CD4-positive, alpha-beta T cell (primary cell): ENCODE measurements at regions of chr13 and their contacts with region 1.

Region 1: GRCh38 chr13:42991892-42992763 is at the start of gene EPSTI1:
- DNase-seq: peak; percentile 57 to 86 (median 72)
- ATAC-seq: peak; percentile 80
- H3K4me3 ChIP-seq: peak within 1 kb of the TSS; percentile 94
- H3K4me3 Mint-ChIP-seq: peak within 1 kb of the TSS; percentile 94
- H3K27ac ChIP-seq: peak within 1 kb of the TSS; percentile 92 to 94
- H3K27ac Mint-ChIP-seq: peak within 1 kb of the TSS; percentile 100
- H3K4me1 ChIP-seq: peaks cover 27% of the 10 kb centered on the region
- H3K4me1 Mint-ChIP-seq: peaks cover 54% of the 10 kb centered on the region
- H3K27me3 ChIP-seq: no peaks in the 10 kb centered on the region
- H3K27me3 Mint-ChIP-seq: no peaks in the 10 kb centered on the region
- CTCF ChIP-seq: no peak
- total RNA-seq, gene EPSTI1: 23.5 to 24.5 TPM

Region 2: DNA sequence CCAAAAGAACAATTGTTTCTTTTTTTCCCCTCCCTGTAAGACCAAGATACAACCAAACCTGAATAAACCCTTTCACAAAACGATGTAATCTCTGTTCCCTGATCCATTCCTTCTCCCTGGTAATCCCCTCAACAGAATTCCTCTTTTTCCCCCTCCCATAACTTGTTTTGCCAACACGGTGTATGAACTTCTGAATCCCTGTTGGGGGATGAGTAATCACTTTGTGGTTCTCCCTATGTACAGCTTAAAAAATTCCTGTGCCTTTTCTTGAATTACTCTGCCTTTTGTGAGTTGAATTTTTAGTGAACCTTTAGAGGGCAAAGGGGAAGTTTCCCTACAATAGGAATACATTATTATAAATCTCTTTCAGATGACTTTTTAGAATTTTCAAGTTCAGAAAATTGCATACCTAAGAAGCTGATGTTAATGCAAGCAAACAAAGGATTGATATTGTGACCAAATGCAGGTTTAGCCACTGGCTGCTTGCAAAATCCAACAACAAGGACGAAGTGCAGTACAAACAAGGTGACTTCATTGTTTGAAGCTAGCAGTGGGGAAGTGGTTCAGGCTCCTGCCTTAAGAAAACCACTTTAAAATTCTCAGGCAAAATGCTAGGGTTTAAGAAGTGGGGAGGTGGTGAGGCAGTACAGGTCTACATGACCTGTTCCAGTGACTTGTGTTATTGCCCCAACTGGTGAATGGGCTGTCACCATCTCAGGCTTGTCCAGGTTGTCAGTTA is 14.9 kb after region 1 on chr13:
- CTCF ChIA-PET with region 1: no interaction called
- POLR2A ChIA-PET with region 1: interaction called, 17 read pairs
- intact Hi-C with region 1: no loop called
- DNase-seq: no peak
- ATAC-seq: no peak
- H3K4me3 ChIP-seq: no peak overlapping the region
- H3K4me3 Mint-ChIP-seq: no peak overlapping the region
- H3K27ac ChIP-seq: no peak overlapping the region
- H3K27ac Mint-ChIP-seq: no peak overlapping the region
- H3K4me1 ChIP-seq: no peaks in the 10 kb centered on the region
- H3K4me1 Mint-ChIP-seq: no peaks in the 10 kb centered on the region
- H3K27me3 ChIP-seq: no peaks in the 10 kb centered on the region
- H3K27me3 Mint-ChIP-seq: no peaks in the 10 kb centered on the region
- CTCF ChIP-seq: no peak

Region 3: DNA sequence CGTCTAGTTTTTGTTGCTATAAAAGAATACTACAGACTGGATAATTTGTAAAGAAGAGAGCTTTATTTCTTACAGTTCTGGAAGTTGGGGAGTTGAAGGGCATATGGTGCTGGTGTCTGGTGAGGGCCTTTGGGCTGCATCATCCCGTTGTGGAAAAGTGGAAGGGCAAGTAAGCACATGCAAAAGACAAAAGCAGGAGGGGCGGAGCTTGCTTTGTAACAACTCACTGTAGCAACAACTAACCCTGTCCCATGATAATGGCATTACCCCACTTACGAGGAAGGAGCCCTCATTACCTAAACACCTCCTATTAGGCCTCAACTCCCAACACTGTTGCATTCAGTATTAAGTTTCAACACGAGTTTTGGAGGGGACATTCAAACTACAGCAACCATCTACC is 24.1 kb after region 1 on chr13:
- CTCF ChIA-PET with region 1: interaction called, 4 read pairs
- POLR2A ChIA-PET with region 1: interaction called, 82 read pairs
- intact Hi-C with region 1: loop called in 1 of 2 experiments (anchors 2 kb)
- DNase-seq: no peak
- ATAC-seq: no peak
- H3K4me3 ChIP-seq: no peak overlapping the region
- H3K4me3 Mint-ChIP-seq: no peak overlapping the region
- H3K27ac ChIP-seq: no peak overlapping the region
- H3K27ac Mint-ChIP-seq: no peak overlapping the region
- H3K4me1 ChIP-seq: no peaks in the 10 kb centered on the region
- H3K4me1 Mint-ChIP-seq: no peaks in the 10 kb centered on the region
- H3K27me3 ChIP-seq: no peaks in the 10 kb centered on the region
- H3K27me3 Mint-ChIP-seq: no peaks in the 10 kb centered on the region
- CTCF ChIP-seq: no peak

Region 4: GRCh38 chr13:43023289-43023951 is 31.3 kb after region 1 on chr13 and contains the start of gene DNAJC15:
- CTCF ChIA-PET with region 1: interaction called, 4 read pairs
- POLR2A ChIA-PET with region 1: interaction called, 82 read pairs
- intact Hi-C with region 1: loop called (anchors 1 to 5 kb)
- DNase-seq: peak; percentile 41 to 90 (median 76)
- ATAC-seq: peak; percentile 89
- H3K4me3 ChIP-seq: peak within 1 kb of the TSS; percentile 89
- H3K4me3 Mint-ChIP-seq: peak within 1 kb of the TSS; percentile 92
- H3K27ac ChIP-seq: peak within 1 kb of the TSS; percentile 52 to 69
- H3K27ac Mint-ChIP-seq: peak within 1 kb of the TSS; percentile 96
- H3K4me1 ChIP-seq: peaks cover 24% of the 10 kb centered on the region
- H3K4me1 Mint-ChIP-seq: peaks cover 39% of the 10 kb centered on the region
- H3K27me3 ChIP-seq: no peaks in the 10 kb centered on the region
- H3K27me3 Mint-ChIP-seq: no peaks in the 10 kb centered on the region
- CTCF ChIP-seq: no peak
- total RNA-seq, gene DNAJC15: 6.8 to 7.6 TPM

Region 5: GRCh38 chr13:43041369-43041921 is 49.3 kb after region 1 on chr13:
- CTCF ChIA-PET with region 1: no interaction called
- POLR2A ChIA-PET with region 1: interaction called, 43 read pairs
- intact Hi-C with region 1: no loop called
- DNase-seq: no peak
- ATAC-seq: no peak
- H3K4me3 ChIP-seq: no peak overlapping the region
- H3K4me3 Mint-ChIP-seq: no peak overlapping the region
- H3K27ac ChIP-seq: no peak overlapping the region
- H3K27ac Mint-ChIP-seq: peak overlapping the region; percentile 94
- H3K4me1 ChIP-seq: peaks cover 14% of the 10 kb centered on the region
- H3K4me1 Mint-ChIP-seq: peaks cover 79% of the 10 kb centered on the region
- H3K27me3 ChIP-seq: no peaks in the 10 kb centered on the region
- H3K27me3 Mint-ChIP-seq: no peaks in the 10 kb centered on the region
- CTCF ChIP-seq: no peak

Region 6: GRCh38 chr13:43054803-43055802 is 63.0 kb after region 1 on chr13:
- CTCF ChIA-PET with region 1: interaction called, 5 read pairs
- POLR2A ChIA-PET with region 1: interaction called, 77 read pairs
- intact Hi-C with region 1: loop called (anchors 2 to 5 kb)
- DNase-seq: peak in 7 of 14 experiments; percentile 10 to 69 (median 34)
- ATAC-seq: peak; percentile 46
- H3K4me3 ChIP-seq: peak overlapping the region; percentile 69
- H3K4me3 Mint-ChIP-seq: no peak overlapping the region
- H3K27ac ChIP-seq: peak overlapping the region; percentile 81 to 84
- H3K27ac Mint-ChIP-seq: no peak overlapping the region
- H3K4me1 ChIP-seq: peaks cover 26% of the 10 kb centered on the region
- H3K4me1 Mint-ChIP-seq: peaks cover 5% of the 10 kb centered on the region
- H3K27me3 ChIP-seq: no peaks in the 10 kb centered on the region
- H3K27me3 Mint-ChIP-seq: no peaks in the 10 kb centered on the region
- CTCF ChIP-seq: no peak

Region 7: DNA sequence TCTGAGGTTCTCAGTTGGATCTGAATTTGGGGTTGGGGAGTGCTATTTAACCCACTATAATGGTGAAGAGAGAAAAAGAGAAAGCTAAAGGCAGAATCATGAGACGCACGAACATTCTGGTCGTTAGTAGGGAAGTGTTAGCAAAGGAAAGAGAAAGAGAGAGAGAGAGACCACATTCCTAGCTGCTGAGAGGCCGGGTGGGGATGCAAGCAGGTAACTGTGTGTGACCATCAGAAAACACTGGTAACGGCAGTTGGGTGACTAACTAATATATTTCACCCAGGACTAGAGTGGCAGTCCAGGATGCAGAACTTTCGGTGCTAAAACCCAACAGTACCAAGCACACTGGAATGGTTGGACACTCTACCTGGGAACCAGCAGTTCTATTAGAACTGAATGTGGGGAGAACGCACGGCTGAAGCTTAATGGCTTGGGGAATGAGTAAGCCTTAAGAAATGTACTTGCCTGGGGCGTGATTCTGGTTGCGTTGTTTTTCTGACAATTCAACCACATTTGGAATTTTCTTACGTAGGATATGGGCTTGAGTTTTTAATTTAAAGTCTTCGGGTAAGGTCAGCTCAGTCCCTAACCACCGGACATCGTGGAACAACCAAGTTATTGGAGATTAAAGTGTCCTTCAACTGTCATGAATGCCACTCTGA is 161.4 kb after region 1 on chr13:
- CTCF ChIA-PET with region 1: no interaction called
- POLR2A ChIA-PET with region 1: no interaction called
- intact Hi-C with region 1: no loop called
- DNase-seq: no peak
- ATAC-seq: no peak
- H3K4me3 ChIP-seq: no peak overlapping the region
- H3K4me3 Mint-ChIP-seq: no peak overlapping the region
- H3K27ac ChIP-seq: no peak overlapping the region
- H3K27ac Mint-ChIP-seq: no peak overlapping the region
- H3K4me1 ChIP-seq: no peaks in the 10 kb centered on the region
- H3K4me1 Mint-ChIP-seq: no peaks in the 10 kb centered on the region
- H3K27me3 ChIP-seq: no peaks in the 10 kb centered on the region
- H3K27me3 Mint-ChIP-seq: peaks cover 3% of the 10 kb centered on the region
- CTCF ChIP-seq: no peak